CD14-positive monocyte (primary cell): ENCODE measurements at regions of chr11 and their contacts with region 1.

Region 1: GRCh38 chr11:33362051-33362910 is 105.1 kb downstream of the HIPK3 start:
- DNase-seq: peak; percentile 12 to 28 (median 25)
- H3K4me3 ChIP-seq: no peak overlapping the region
- H3K4me3 Mint-ChIP-seq: peak overlapping the region in 1 of 2 donors; percentile 56
- H3K27ac ChIP-seq: no peak overlapping the region
- H3K27ac Mint-ChIP-seq: no peak overlapping the region
- H3K4me1 ChIP-seq: peaks cover 4 to 5% of the 10 kb centered on the region in 2 donors
- H3K4me1 Mint-ChIP-seq: peaks cover 2% of the 10 kb centered on the region
- H3K27me3 ChIP-seq: peaks cover 3 to 9% of the 10 kb centered on the region in 2 donors
- H3K27me3 Mint-ChIP-seq: peaks cover 0 to 16% (median 4%) of the 10 kb centered on the region in 3 donors
- CTCF ChIP-seq: peak; percentile 69

Region 2: GRCh38 chr11:33412241-33412640 is 50.0 kb after region 1 on chr11:
- intact Hi-C with region 1: no loop called
- DNase-seq: no peak
- H3K4me3 ChIP-seq: no peak overlapping the region
- H3K4me3 Mint-ChIP-seq: no peak overlapping the region
- H3K27ac ChIP-seq: no peak overlapping the region
- H3K27ac Mint-ChIP-seq: no peak overlapping the region
- H3K4me1 ChIP-seq: no peaks in the 10 kb centered on the region
- H3K4me1 Mint-ChIP-seq: no peaks in the 10 kb centered on the region
- H3K27me3 ChIP-seq: peaks cover 18% of the 10 kb centered on the region in 2 donors
- H3K27me3 Mint-ChIP-seq: peaks cover 17 to 23% (median 22%) of the 10 kb centered on the region in 3 donors
- CTCF ChIP-seq: no peak

Region 3: GRCh38 chr11:33687733-33688479 is 325.6 kb after region 1 on chr11:
- intact Hi-C with region 1: loop called (anchors 10 kb)
- DNase-seq: peak in 1 of 3 donors; percentile 11
- H3K4me3 ChIP-seq: no peak overlapping the region
- H3K4me3 Mint-ChIP-seq: no peak overlapping the region
- H3K27ac ChIP-seq: no peak overlapping the region
- H3K27ac Mint-ChIP-seq: no peak overlapping the region
- H3K4me1 ChIP-seq: no peaks in the 10 kb centered on the region
- H3K4me1 Mint-ChIP-seq: no peaks in the 10 kb centered on the region
- H3K27me3 ChIP-seq: no peaks in the 10 kb centered on the region
- H3K27me3 Mint-ChIP-seq: peaks cover 0 to 3% (median 1%) of the 10 kb centered on the region in 3 donors
- CTCF ChIP-seq: peak; percentile 39

Region 4: DNA sequence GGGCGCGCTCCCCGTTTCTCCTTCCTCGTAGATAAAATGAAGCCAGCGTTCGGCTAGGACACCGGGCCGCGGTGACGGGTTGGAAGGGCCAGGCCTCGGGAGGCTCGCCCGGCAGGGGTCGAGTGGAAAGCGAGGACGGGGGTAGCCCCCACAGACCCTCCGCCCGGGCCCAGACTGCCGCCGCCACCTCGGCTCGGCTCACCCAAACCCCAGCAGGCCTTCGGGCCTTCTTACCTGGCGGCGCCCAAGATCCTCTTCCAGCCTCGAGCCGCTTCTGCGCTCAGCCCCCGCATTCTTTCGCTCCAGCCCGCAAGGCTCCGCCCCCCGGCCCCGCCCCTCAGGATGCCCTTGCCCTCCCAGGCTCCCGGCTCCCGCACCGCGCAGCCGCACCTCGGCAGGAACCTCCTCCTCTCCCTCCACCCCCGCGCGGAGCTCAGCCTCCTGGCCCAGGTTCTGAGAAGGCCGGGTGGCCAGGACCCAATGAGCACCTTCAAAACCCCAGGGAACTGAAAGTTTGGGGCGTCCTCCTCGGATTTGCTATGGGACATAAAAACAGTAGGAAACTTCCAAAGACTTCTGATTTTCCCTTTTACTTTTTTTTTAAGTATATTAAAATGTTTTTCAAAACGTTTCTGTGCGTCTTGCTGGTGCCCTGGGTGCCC is 374.0 kb after region 1 on chr11 and contains the start of gene CD59:
- intact Hi-C with region 1: loop called (anchors 5 to 10 kb)
- DNase-seq: peak; percentile 44 to 65 (median 53)
- H3K4me3 ChIP-seq: peak within 1 kb of the TSS; percentile 55 to 83 (median 76)
- H3K4me3 Mint-ChIP-seq: peak within 1 kb of the TSS; percentile 87 to 94
- H3K27ac ChIP-seq: peak within 1 kb of the TSS in 1 of 2 donors; percentile 12
- H3K27ac Mint-ChIP-seq: peak within 1 kb of the TSS in 4 of 7 donors; percentile 2 to 78 (median 50)
- H3K4me1 ChIP-seq: peaks cover 35 to 41% of the 10 kb centered on the region in 2 donors
- H3K4me1 Mint-ChIP-seq: peaks cover 38% of the 10 kb centered on the region
- H3K27me3 ChIP-seq: peaks cover 11 to 30% of the 10 kb centered on the region in 2 donors
- H3K27me3 Mint-ChIP-seq: peaks cover 30 to 43% (median 33%) of the 10 kb centered on the region in 3 donors
- CTCF ChIP-seq: no peak
- polyA plus RNA-seq, gene CD59: 3.7 to 34.9 (median 21.1) TPM

Region 5: DNA sequence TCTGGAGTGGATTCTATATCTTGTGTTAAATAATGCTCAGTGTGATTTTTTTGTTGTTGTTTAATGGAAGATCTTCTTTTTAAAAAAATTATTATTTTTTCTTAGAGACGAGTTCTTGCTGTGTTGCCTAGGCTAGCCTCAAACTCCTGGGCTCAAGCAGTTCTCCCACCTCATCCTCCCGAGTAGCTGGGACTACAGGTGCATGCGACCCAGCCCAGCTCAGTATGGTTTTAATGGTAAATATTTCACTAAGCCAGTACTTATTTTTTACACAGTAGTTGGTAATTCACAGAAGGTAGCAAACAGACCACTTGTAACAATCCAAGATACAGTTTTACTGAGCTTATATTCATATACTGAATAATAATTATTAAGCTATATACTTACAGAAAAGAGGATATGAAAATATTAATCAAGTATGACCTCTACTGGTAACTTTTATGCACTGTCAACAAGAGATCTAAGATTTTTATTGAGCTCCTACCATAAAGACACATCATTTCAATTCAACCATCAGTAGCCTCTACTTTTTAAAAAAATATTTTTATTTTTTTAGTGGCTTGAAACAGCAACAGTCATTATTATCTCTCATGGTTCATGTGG is 380.1 kb after region 1 on chr11:
- intact Hi-C with region 1: loop called (anchors 5 to 10 kb)
- DNase-seq: peak in 2 of 3 donors; percentile 19 to 36
- H3K4me3 ChIP-seq: no peak overlapping the region
- H3K4me3 Mint-ChIP-seq: no peak overlapping the region
- H3K27ac ChIP-seq: no peak overlapping the region
- H3K27ac Mint-ChIP-seq: no peak overlapping the region
- H3K4me1 ChIP-seq: no peaks in the 10 kb centered on the region
- H3K4me1 Mint-ChIP-seq: no peaks in the 10 kb centered on the region
- H3K27me3 ChIP-seq: peaks cover 3 to 7% of the 10 kb centered on the region in 2 donors
- H3K27me3 Mint-ChIP-seq: peaks cover 5 to 12% (median 9%) of the 10 kb centered on the region in 3 donors
- CTCF ChIP-seq: peak; percentile 79